BJ (cell line): ENCODE measurements at regions of chr5 and their contacts with region 1.

Region 1: DNA sequence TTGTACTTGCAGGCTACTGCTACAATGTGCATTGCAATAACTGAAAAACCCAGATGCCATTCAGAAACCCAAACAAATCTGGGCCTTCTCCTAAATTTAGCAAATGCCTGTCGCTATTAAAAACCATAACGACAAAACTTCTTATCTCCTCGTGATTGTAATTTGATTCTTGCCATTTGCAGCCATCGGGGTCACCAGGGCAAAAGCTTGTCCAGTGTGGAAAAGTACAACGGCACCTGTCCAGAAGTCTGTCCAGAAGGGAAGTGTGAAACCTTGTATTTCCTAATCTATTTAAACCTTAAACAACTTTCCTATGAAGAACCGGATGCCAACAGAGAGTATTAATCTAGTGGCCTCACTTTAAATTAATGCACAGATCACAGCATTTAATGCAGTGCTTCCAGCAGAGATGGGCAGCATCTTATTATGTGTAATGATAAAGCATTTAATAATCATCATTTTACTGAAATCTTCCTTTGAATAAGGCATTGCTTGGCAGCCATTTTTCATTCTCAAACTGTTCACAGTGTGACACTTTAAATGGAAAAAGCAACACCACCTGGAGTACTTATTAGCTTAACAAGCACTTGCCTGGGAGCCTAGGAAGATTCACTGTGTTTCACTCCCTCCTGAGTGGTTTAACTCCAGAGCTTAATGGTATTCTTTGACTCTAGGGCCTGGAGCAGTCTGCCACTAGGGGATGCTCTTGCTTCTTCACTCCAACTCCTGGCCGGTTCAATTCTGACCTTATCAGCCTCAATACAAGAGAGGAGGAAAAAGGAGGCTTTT is 4.9 kb upstream of the C7 start:
- DNase-seq: peak; percentile 19
- H3K4me3 ChIP-seq: no peak overlapping the region
- H3K27me3 ChIP-seq: no peaks in the 10 kb centered on the region
- CTCF ChIP-seq: peak; percentile 99

Region 2: GRCh38 chr5:41176952-41177351 is 272.6 kb after region 1 on chr5:
- CTCF ChIA-PET with region 1: no interaction called
- POLR2A ChIA-PET with region 1: interaction called, 13 read pairs
- DNase-seq: no peak
- H3K4me3 ChIP-seq: no peak overlapping the region
- H3K27me3 ChIP-seq: no peaks in the 10 kb centered on the region
- CTCF ChIP-seq: no peak

Region 3: GRCh38 chr5:41346609-41347008 is 442.2 kb after region 1 on chr5:
- CTCF ChIA-PET with region 1: interaction called, 10 read pairs
- POLR2A ChIA-PET with region 1: no interaction called
- DNase-seq: no peak
- H3K4me3 ChIP-seq: no peak overlapping the region
- H3K27me3 ChIP-seq: no peaks in the 10 kb centered on the region
- CTCF ChIP-seq: no peak

Region 4: DNA sequence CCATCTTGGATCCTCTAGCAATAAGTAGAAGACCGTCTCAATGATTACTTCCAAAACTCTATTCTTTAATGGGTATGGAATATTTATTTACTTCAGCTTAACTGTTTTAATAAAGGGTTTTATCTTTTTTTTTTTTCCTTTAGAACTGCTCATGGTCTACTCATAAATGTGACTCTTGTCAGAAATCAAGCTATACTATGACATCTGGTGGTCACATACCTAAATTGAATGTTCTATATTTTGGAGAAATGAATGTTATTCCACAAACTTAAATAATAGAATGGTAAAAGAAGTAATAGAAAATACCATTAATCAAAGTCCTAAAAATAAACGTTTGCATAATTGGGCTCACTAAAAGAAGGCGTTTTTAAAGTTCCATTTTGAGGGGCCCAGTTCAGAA is 737.2 kb after region 1 on chr5:
- CTCF ChIA-PET with region 1: interaction called, 10 read pairs
- POLR2A ChIA-PET with region 1: no interaction called
- DNase-seq: no peak
- H3K4me3 ChIP-seq: no peak overlapping the region
- H3K27me3 ChIP-seq: no peaks in the 10 kb centered on the region
- CTCF ChIP-seq: no peak